ENCODE measurements at regions of chr22 and their contacts with region 1.

Region 1: GRCh38 chr22:41688365-41689211 is at the start of gene SNU13:
- DNase-seq: peak; percentile 92
- H3K4me3 Mint-ChIP-seq: peak within 1 kb of the TSS; percentile 96
- H3K27ac Mint-ChIP-seq: peak within 1 kb of the TSS; percentile 97
- H3K4me1 Mint-ChIP-seq: peaks cover 12% of the 10 kb centered on the region
- H3K27me3 Mint-ChIP-seq: no peaks in the 10 kb centered on the region
- CTCF ChIP-seq: no peak
- total RNA-seq, gene SNU13: 280 and 286 TPM in 2 replicates

Region 2: GRCh38 chr22:41666661-41667258 is 21.8 kb before region 1 on chr22:
- CTCF ChIA-PET with region 1: interaction called, 7 read pairs
- POLR2A ChIA-PET with region 1: interaction called, 35 read pairs
- intact Hi-C with region 1: loop called (anchors 2 kb)
- DNase-seq: peak; percentile 91
- H3K4me3 Mint-ChIP-seq: peak overlapping the region; percentile 64
- H3K27ac Mint-ChIP-seq: peak overlapping the region; percentile 93
- H3K4me1 Mint-ChIP-seq: peaks cover 5% of the 10 kb centered on the region
- H3K27me3 Mint-ChIP-seq: no peaks in the 10 kb centered on the region
- CTCF ChIP-seq: peak; percentile 92

Region 3: DNA sequence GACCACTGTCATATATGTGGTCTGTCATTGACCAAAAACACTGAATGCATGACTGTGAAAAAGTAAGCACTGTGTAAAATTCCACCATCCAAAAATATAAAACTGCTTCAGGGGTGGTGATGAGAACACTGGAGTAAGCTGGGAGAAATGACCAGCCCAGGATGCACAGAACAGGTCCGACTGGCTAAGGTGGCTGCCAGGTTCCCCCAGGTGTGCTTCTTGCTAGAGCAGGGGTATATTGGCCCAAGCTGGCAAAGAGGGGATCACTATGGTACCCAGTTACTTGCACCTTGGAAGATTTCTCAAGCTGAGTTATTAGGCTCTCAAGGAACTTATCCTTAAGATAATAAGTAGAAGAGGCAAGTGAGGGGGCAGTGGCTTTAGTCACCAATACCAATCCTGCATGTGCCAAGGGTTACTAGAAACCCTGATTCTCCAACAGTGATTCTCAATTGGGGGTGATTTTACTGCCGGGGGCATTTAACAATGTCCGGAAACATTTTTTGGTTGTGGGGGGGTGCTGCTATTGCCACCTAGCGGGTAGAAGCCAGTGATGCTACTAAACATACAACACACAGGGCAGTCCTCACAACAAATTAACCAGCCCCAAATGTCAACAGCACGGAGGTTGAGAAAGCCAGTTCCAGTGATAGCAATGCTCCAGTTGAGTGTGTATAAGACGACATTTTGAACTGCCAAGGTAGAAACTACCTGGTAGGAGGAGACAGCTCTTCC is 15.6 kb before region 1 on chr22:
- CTCF ChIA-PET with region 1: interaction called, 5 read pairs
- POLR2A ChIA-PET with region 1: interaction called, 18 read pairs
- intact Hi-C with region 1: no loop called
- DNase-seq: peak; percentile 43
- H3K4me3 Mint-ChIP-seq: no peak overlapping the region
- H3K27ac Mint-ChIP-seq: no peak overlapping the region
- H3K4me1 Mint-ChIP-seq: peaks cover 10% of the 10 kb centered on the region
- H3K27me3 Mint-ChIP-seq: no peaks in the 10 kb centered on the region
- CTCF ChIP-seq: peak; percentile 31

Region 4: GRCh38 chr22:41946629-41947423 is 258.2 kb after region 1 on chr22 and contains the start of gene CENPM:
- CTCF ChIA-PET with region 1: no interaction called
- POLR2A ChIA-PET with region 1: interaction called, 12 read pairs
- intact Hi-C with region 1: no loop called
- DNase-seq: peak; percentile 96
- H3K4me3 Mint-ChIP-seq: peak within 1 kb of the TSS; percentile 84
- H3K27ac Mint-ChIP-seq: peak within 1 kb of the TSS; percentile 81
- H3K4me1 Mint-ChIP-seq: peaks cover 12% of the 10 kb centered on the region
- H3K27me3 Mint-ChIP-seq: no peaks in the 10 kb centered on the region
- CTCF ChIP-seq: no peak
- total RNA-seq, gene CENPM: 9.1 and 21.1 TPM in 2 replicates

Region 5: GRCh38 chr22:41976401-41976901 is 287.9 kb after region 1 on chr22:
- CTCF ChIA-PET with region 1: no interaction called
- POLR2A ChIA-PET with region 1: no interaction called
- intact Hi-C with region 1: no loop called
- DNase-seq: no peak
- H3K4me3 Mint-ChIP-seq: peak overlapping the region; percentile 2
- H3K27ac Mint-ChIP-seq: no peak overlapping the region
- H3K4me1 Mint-ChIP-seq: no peaks in the 10 kb centered on the region
- H3K27me3 Mint-ChIP-seq: peaks cover 30% of the 10 kb centered on the region
- CTCF ChIP-seq: no peak